Activated CD4-positive, alpha-beta memory T cell treated with anti-CD3 and anti-CD28 coated beads for 36 hours (primary cell): ENCODE measurements at regions of chr7 and their contacts with region 1.

Region 1: DNA sequence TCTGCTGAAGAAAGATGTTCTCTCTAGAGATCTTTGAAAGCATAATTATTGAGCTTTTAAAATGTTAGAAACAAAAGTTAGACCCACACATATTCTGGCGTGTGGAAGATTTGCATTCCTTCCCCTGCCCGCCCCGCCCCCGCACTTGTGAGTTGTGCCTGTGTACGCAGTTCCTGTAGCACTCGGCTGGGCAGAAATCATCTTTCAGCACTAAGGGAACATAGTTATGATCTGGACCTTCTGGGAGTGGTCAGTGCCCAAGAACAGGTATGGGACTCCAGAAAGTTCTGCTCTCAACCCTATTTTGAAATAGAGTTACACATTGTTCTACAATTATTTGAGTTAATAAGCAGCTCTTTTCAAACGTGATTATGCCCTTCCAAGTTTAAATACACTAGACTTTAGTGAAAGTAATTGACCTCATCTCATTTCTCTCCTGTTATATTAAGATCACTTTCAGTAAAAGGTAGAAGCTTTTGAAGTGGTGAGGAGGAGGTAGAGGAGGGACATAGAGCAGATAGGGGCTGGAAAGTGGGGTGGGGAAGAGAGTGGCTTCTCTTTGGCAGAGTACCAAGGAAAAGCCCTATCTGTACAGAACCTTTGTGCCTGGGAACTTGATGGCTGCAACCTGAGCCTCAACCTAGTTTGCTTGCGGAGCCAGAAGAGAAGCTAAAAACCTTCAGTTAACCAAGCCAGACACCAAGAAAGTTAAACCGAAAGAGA is 5.7 kb downstream of the BLVRA start:
- DNase-seq: peak; percentile 74
- H3K4me3 Mint-ChIP-seq: no peak overlapping the region
- H3K27ac Mint-ChIP-seq: peak overlapping the region; percentile 6
- H3K4me1 Mint-ChIP-seq: peaks cover 43% of the 10 kb centered on the region
- H3K27me3 Mint-ChIP-seq: no peaks in the 10 kb centered on the region

Region 2: DNA sequence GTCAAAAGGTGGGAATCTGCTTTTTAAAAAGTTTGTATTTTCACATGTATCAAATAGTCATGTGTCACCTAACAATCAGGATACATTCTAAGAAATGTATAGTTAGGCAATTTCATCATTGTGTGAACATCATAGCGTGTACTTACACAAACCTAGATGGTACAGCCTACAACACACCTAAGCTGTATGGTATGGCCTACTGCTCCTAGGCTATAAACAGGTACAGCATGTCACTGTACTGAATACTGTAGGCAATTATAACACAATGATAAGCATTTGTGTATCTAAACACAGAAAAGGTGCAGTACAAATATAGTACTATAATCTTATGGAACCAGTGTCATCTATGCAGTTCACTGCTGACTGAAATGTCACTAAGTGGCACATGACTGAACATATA is 52.7 kb before region 1 on chr7:
- CTCF ChIA-PET with region 1: no interaction called
- POLR2A ChIA-PET with region 1: no interaction called
- intact Hi-C with region 1: no loop called
- DNase-seq: no peak
- H3K4me3 Mint-ChIP-seq: no peak overlapping the region
- H3K27ac Mint-ChIP-seq: no peak overlapping the region
- H3K4me1 Mint-ChIP-seq: peaks cover 13% of the 10 kb centered on the region
- H3K27me3 Mint-ChIP-seq: no peaks in the 10 kb centered on the region

Region 3: GRCh38 chr7:43729214-43729923 is 34.8 kb before region 1 on chr7 and contains the start of gene COA1:
- CTCF ChIA-PET with region 1: no interaction called
- POLR2A ChIA-PET with region 1: no interaction called
- intact Hi-C with region 1: loop called (anchors 5 kb)
- DNase-seq: peak; percentile 89
- H3K4me3 Mint-ChIP-seq: peak within 1 kb of the TSS; percentile 94
- H3K27ac Mint-ChIP-seq: peak within 1 kb of the TSS; percentile 79
- H3K4me1 Mint-ChIP-seq: peaks cover 32% of the 10 kb centered on the region
- H3K27me3 Mint-ChIP-seq: no peaks in the 10 kb centered on the region
- total RNA-seq, gene COA1: 78.9 to 79.6 TPM

Region 4: GRCh38 chr7:43942997-43943704 is 179.0 kb after region 1 on chr7:
- CTCF ChIA-PET with region 1: no interaction called
- POLR2A ChIA-PET with region 1: no interaction called
- intact Hi-C with region 1: no loop called
- DNase-seq: no peak
- H3K4me3 Mint-ChIP-seq: no peak overlapping the region
- H3K27ac Mint-ChIP-seq: no peak overlapping the region
- H3K4me1 Mint-ChIP-seq: no peaks in the 10 kb centered on the region
- H3K27me3 Mint-ChIP-seq: no peaks in the 10 kb centered on the region